Panc1 (cell line): ENCODE measurements at regions of chr15 and their contacts with region 1.

Region 1: DNA sequence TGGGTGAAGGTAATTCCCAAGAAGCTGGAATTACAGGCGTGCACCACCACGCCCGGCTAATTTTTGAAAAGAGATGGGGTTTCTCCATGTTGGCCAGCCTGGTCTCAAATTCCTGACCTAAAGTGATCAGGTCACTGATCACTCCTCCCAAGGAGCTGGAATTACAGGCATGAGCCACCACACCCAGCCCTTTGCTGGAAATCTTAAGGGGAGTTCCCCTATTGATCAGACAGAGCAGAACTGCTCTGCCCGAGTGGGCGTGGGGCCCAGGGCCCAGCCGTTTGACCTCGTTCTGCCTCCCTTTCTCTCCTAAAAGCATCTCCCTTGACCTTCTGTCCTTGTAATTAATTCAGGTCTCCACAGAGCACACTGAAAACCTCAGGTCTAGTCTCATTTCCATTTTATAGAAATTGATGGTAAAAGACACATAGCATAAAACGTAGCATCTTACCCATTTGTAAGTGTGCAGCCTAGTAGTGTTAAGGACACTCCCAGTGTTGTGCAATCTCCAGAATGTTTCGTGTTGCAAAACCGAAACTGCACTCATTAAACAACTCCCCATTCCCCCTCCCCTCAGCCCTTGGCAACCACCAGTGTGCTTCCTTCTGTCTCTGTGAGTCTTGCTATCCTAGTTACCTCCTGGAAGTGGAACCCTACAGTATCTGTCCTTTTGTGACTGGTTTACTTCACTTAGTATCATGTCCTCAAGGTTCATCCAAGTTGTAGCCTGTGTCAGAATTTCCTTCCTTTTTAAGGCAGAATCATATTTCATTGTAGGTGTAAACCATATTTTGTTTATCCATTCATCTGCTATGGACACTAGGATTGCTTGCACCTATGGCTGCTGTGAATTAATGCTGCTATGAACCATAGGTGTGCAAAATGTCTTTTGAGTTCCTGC is 89.4 kb downstream of the SLCO3A1 start:
- DNase-seq: no peak
- ATAC-seq: no peak
- H3K4me3 ChIP-seq: no peak overlapping the region
- H3K27ac ChIP-seq: peak overlapping the region; percentile 26; the same call in 1 of the 2 replicates
- H3K4me1 ChIP-seq: peaks cover 34% of the 10 kb centered on the region
- H3K27me3 ChIP-seq: no peaks in the 10 kb centered on the region
- CTCF ChIP-seq: no peak

Region 2: GRCh38 chr15:91867581-91868026 is 75.3 kb before region 1 on chr15:
- CTCF ChIA-PET with region 1: interaction called, 10 read pairs
- POLR2A ChIA-PET with region 1: no interaction called
- in situ Hi-C with region 1: no loop called
- intact Hi-C with region 1: no loop called
- DNase-seq: peak; percentile 46
- ATAC-seq: peak; percentile 97
- H3K4me3 ChIP-seq: peak overlapping the region in 1 of 2 experiments; percentile 34; a peak in 2 of 4 replicates
- H3K27ac ChIP-seq: peak overlapping the region; percentile 82
- H3K4me1 ChIP-seq: peaks cover 50% of the 10 kb centered on the region
- H3K27me3 ChIP-seq: no peaks in the 10 kb centered on the region
- CTCF ChIP-seq: no peak